PC-9 (cell line): ENCODE measurements at regions of chr12 and their contacts with region 1.

Region 1: GRCh38 chr12:6890789-6891645 is 13.6 kb upstream of the LRRC23 start:
- DNase-seq: peak; percentile 89 to 100
- H3K4me3 ChIP-seq: peak overlapping the region; percentile 57
- H3K27ac ChIP-seq: peak overlapping the region; percentile 90
- H3K4me1 ChIP-seq: peaks cover 15% of the 10 kb centered on the region
- H3K27me3 ChIP-seq: no peaks in the 10 kb centered on the region
- CTCF ChIP-seq: peak; percentile 74

Region 2: DNA sequence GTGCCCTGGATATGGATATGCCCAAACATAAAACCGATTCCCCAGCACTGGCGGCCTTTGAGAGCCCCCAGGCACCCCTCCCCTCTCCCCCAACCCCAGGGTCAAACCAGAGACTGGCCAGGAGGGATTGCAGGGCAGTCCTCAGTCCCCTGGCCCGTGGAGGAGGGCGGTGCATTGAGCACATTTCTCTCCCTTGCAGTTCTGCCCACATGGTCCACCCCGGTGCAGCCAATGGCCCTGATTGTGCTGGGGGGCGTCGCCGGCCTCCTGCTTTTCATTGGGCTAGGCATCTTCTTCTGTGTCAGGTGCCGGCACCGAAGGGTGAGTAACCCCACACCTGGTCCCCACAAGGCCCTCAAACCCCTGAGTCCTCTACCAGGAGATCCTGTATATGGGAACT is 72.8 kb before region 1 on chr12:
- CTCF ChIA-PET with region 1: no interaction called
- POLR2A ChIA-PET with region 1: no interaction called
- intact Hi-C with region 1: no loop called
- DNase-seq: no peak
- H3K4me3 ChIP-seq: no peak overlapping the region
- H3K27ac ChIP-seq: no peak overlapping the region
- H3K4me1 ChIP-seq: no peaks in the 10 kb centered on the region; the same call in 1 of the 2 replicates
- H3K27me3 ChIP-seq: peaks cover 66% of the 10 kb centered on the region
- CTCF ChIP-seq: no peak

Region 3: GRCh38 chr12:6914246-6914946 is 23.4 kb after region 1 on chr12 and contains the start of gene ENO2:
- CTCF ChIA-PET with region 1: no interaction called
- POLR2A ChIA-PET with region 1: no interaction called
- intact Hi-C with region 1: loop called (anchors 1 kb)
- DNase-seq: peak in 1 of 2 experiments; percentile 75
- H3K4me3 ChIP-seq: peak within 1 kb of the TSS; percentile 77
- H3K27ac ChIP-seq: no peak within 1 kb of the TSS
- H3K4me1 ChIP-seq: peaks cover 5% of the 10 kb centered on the region; the same call in 1 of the 2 replicates
- H3K27me3 ChIP-seq: peaks cover 11% of the 10 kb centered on the region
- CTCF ChIP-seq: no peak
- total RNA-seq, gene ENO2: 38.8 and 56.6 TPM in 2 replicates

Region 4: GRCh38 chr12:7031306-7031705 is 140.3 kb after region 1 on chr12:
- CTCF ChIA-PET with region 1: no interaction called
- POLR2A ChIA-PET with region 1: interaction called, 22 read pairs
- intact Hi-C with region 1: no loop called
- DNase-seq: no peak
- H3K4me3 ChIP-seq: no peak overlapping the region
- H3K27ac ChIP-seq: no peak overlapping the region
- H3K4me1 ChIP-seq: no peaks in the 10 kb centered on the region
- H3K27me3 ChIP-seq: no peaks in the 10 kb centered on the region; the same call in 1 of the 2 replicates
- CTCF ChIP-seq: no peak

Region 5: DNA sequence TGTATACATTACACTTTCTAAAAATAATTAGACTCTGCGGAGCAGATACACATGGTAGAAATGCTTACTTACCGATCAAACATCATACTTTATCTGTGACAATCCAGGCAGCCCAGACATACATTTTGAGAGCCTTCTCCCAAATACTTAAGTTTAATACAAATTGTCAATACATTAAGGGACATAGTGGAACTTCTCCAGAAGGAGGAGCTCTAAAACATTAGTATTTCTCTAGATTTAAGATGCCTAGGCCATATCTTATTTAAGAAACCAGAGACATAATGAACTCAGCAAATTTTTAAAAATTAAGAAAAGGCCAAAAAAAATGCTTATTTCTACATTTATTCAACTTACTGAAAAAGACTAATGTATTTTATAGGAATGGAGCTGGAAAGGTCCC is 428.9 kb after region 1 on chr12:
- CTCF ChIA-PET with region 1: no interaction called
- POLR2A ChIA-PET with region 1: no interaction called
- intact Hi-C with region 1: no loop called
- DNase-seq: no peak
- H3K4me3 ChIP-seq: no peak overlapping the region
- H3K27ac ChIP-seq: no peak overlapping the region
- H3K4me1 ChIP-seq: no peaks in the 10 kb centered on the region
- H3K27me3 ChIP-seq: no peaks in the 10 kb centered on the region
- CTCF ChIP-seq: peak; percentile 43; the same call in 1 of the 2 replicates